ENCODE measurements at regions of chr1 and their contacts with region 1.

Region 1: GRCh38 chr1:6489799-6490180 is 1.7 kb downstream of the PLEKHG5 start:
- DNase-seq: peak; percentile 15
- ATAC-seq: peak; percentile 86
- H3K4me3 ChIP-seq: peak overlapping the region; percentile 89
- H3K27ac ChIP-seq: peak overlapping the region; percentile 69
- H3K4me1 ChIP-seq: no peaks in the 10 kb centered on the region
- H3K27me3 ChIP-seq: peaks cover 0 to under 1% of the 10 kb centered on the region in 2 experiments; a peak in 3 of 4 replicates
- CTCF ChIP-seq: peak; percentile 88 to 97 (median 94)
- EP300 ChIP-seq: no peak
- POLR2A ChIP-seq: no peak
- RAD21 ChIP-seq: peak; percentile 55

Region 2: DNA sequence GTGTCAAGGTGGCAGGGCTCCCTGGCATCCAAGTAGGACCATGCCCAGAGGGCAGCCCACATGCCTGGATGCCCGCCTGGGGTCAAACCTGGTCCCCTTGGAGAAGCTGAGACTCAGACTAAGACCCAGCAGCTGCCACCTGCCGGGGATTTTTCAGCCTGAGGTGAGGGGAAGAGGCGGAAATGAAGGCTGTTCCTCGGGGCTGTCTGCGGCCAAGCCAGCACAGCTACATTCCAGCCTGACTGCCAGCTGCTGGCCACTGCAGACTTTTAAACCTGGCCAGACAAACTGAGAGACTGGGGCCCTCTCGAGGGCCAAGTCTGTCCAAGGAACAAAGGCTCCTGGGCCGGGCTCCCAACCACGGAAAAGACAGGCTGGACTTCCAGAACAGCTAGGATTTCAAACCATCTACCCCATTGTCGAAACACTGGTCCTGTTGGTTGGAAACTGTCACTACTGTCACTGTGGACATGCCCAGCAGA is 23.6 kb after region 1 on chr1:
- CTCF ChIA-PET with region 1: interaction called, 25 read pairs
- POLR2A ChIA-PET with region 1: no interaction called
- RAD21 ChIA-PET with region 1: interaction called, 6 read pairs
- SMC1A ChIA-PET with region 1: interaction called, 3 read pairs
- in situ Hi-C with region 1: no loop called
- intact Hi-C with region 1: no loop called
- DNase-seq: no peak
- ATAC-seq: peak; percentile 90
- H3K4me3 ChIP-seq: no peak overlapping the region
- H3K27ac ChIP-seq: no peak overlapping the region
- H3K4me1 ChIP-seq: no peaks in the 10 kb centered on the region
- H3K27me3 ChIP-seq: no peaks in the 10 kb centered on the region; a peak in 1 of 4 replicates
- CTCF ChIP-seq: no peak
- EP300 ChIP-seq: no peak
- POLR2A ChIP-seq: no peak
- RAD21 ChIP-seq: no peak

Region 3: GRCh38 chr1:6554031-6554906 is 64.5 kb after region 1 on chr1 and contains the start of gene NOL9:
- CTCF ChIA-PET with region 1: interaction called, 12 read pairs
- POLR2A ChIA-PET with region 1: no interaction called
- RAD21 ChIA-PET with region 1: no interaction called
- SMC1A ChIA-PET with region 1: interaction called, 3 read pairs
- in situ Hi-C with region 1: no loop called
- intact Hi-C with region 1: no loop called
- DNase-seq: peak; percentile 68
- ATAC-seq: peak; percentile 99
- H3K4me3 ChIP-seq: peak within 1 kb of the TSS; percentile 78
- H3K27ac ChIP-seq: peak within 1 kb of the TSS; percentile 78
- H3K4me1 ChIP-seq: peaks cover 9% of the 10 kb centered on the region
- H3K27me3 ChIP-seq: no peaks in the 10 kb centered on the region
- CTCF ChIP-seq: peak; percentile 87 to 96 (median 90)
- EP300 ChIP-seq: no peak
- POLR2A ChIP-seq: peak; percentile 92
- RAD21 ChIP-seq: peak; percentile 33; the same call in 1 of the 2 replicates
- polyA plus RNA-seq, gene NOL9: 3.9 to 4.3 TPM

Region 4: GRCh38 chr1:6646499-6647148 is 156.8 kb after region 1 on chr1:
- CTCF ChIA-PET with region 1: interaction called, 7 read pairs
- POLR2A ChIA-PET with region 1: no interaction called
- RAD21 ChIA-PET with region 1: interaction called, 5 read pairs
- SMC1A ChIA-PET with region 1: interaction called, 3 read pairs
- in situ Hi-C with region 1: no loop called
- intact Hi-C with region 1: loop called (anchors 2 kb)
- DNase-seq: no peak
- ATAC-seq: peak; percentile 61
- H3K4me3 ChIP-seq: no peak overlapping the region
- H3K27ac ChIP-seq: no peak overlapping the region
- H3K4me1 ChIP-seq: no peaks in the 10 kb centered on the region
- H3K27me3 ChIP-seq: no peaks in the 10 kb centered on the region
- CTCF ChIP-seq: peak; percentile 50 to 72 (median 54)
- EP300 ChIP-seq: no peak
- POLR2A ChIP-seq: no peak
- RAD21 ChIP-seq: peak; percentile 75